ENCODE measurements at regions of chr2 and their contacts with region 1.

Region 1: GRCh38 chr2:201860636-201861066 is 54.3 kb downstream of the CDK15 start:
- DNase-seq: peak; percentile 78
- CTCF ChIP-seq: peak; percentile 78

Region 2: DNA sequence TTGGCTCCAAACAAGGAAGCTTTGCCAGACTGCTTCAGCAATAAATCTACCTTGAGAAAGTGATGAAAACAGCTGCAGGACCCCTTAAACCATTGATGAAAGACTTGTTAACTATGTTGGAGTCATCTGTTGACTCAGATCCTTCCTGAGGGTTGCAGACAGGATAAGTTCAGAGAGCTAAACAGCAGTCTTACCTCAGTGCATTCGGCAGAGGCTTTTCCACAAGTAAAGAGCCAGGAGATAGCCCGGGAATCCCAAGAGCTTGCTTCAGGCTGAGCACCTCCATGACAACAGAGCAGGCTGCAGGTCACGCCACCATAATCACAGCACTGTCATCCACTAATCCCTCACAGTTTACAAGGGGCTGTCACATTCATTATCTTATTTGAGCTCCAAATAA is 236.1 kb after region 1 on chr2:
- in situ Hi-C with region 1: no loop called
- DNase-seq: no peak
- CTCF ChIP-seq: no peak

Region 3: GRCh38 chr2:202178342-202178958 is 317.8 kb after region 1 on chr2:
- in situ Hi-C with region 1: loop called (anchors 25 kb)
- DNase-seq: peak; percentile 60
- CTCF ChIP-seq: peak; percentile 79